GM10248 (cell line): ENCODE measurements at regions of chr13 and their contacts with region 1.

Region 1: GRCh38 chr13:77480066-77480465 is 55.4 kb upstream of the SCEL start:
- DNase-seq: no peak
- CTCF ChIP-seq: no peak

Region 2: DNA sequence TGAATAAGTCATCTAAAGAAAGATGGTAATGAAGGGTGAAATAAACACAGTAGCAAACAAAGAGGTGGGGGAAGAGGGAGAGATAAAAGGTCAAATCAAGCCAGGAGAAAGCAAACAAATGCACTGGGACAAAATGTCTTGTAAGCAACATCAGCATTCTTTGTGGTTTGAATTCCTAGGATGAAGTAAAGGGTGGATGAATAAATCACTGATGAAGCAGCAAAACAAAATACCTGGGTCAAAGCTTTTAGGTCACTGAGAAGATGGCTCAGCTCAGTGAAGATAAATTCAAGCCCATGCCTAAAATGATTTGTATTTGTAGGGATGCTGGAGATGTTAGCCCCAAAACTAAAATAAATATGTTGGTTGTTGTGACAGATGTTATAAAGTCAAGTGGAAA is 366.6 kb before region 1 on chr13:
- CTCF ChIA-PET with region 1: no interaction called
- POLR2A ChIA-PET with region 1: no interaction called
- DNase-seq: no peak
- CTCF ChIP-seq: no peak

Region 3: GRCh38 chr13:77329133-77329910 is 150.7 kb before region 1 on chr13:
- CTCF ChIA-PET with region 1: interaction called, 15 read pairs
- POLR2A ChIA-PET with region 1: interaction called, 4 read pairs
- DNase-seq: peak; percentile 82
- CTCF ChIP-seq: no peak

Region 4: GRCh38 chr13:77351315-77351714 is 128.8 kb before region 1 on chr13:
- CTCF ChIA-PET with region 1: interaction called, 12 read pairs
- POLR2A ChIA-PET with region 1: no interaction called
- DNase-seq: no peak
- CTCF ChIP-seq: no peak

Region 5: DNA sequence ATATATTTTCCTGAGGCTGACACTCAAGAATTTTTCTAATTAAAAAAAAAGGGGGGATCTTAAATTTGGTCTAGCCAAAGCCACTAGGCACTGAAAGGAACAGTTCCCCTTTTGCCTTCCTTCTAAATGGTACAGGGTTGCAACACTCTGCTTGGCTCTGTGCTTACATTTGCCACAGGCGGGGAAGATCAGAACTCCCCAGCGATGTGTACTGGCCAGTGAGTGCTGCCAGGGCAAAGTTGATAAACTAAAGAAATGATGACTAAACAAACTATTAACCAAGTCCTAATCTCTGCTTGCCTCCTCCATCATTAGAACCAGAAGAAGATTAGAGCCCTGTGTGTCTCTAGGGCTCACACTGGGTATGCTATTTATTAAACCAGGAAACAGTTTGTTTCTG is 19.9 kb before region 1 on chr13:
- CTCF ChIA-PET with region 1: interaction called, 33 read pairs
- POLR2A ChIA-PET with region 1: no interaction called
- DNase-seq: no peak
- CTCF ChIP-seq: no peak

Region 6: DNA sequence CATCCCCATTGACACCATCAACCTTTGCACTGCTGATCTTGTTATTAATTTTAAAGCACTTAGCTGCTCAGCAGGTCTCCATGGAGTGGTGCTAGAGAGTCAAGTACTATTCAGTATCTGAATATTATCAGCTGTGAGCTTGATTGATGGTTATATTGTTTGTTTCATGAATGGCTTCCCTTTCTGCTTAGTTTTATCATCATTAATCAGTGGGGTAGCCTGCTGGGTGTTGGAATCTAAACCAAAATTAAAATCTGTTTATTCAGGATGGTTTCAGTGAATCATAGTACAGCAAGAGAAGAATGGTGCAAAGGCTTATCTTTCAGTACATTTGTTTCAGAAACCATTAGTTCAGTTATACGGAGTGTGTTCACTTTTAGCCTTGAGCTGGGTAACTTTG is 12.9 kb after region 1 on chr13:
- CTCF ChIA-PET with region 1: interaction called, 33 read pairs
- POLR2A ChIA-PET with region 1: interaction called, 3 read pairs
- DNase-seq: peak; percentile 31
- CTCF ChIP-seq: peak; percentile 81

Region 7: DNA sequence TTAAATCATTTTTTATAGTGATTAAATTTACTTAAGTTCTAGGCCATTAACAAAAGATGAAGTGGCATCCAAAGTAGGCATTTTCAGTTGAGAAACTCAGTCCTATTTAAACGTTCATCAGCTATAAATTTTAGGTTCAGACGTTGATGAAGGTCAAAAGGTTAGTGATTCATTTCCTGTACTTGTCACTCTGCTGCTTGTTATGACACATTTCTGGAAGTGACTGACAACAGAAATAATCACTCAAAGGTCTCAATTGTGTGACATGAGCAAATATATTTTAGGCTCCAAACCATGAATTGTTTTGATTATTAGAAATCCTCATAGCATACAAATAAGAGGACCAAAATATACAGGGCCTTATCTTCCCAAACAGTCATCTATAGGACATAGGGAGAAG is 448.8 kb after region 1 on chr13:
- CTCF ChIA-PET with region 1: no interaction called
- POLR2A ChIA-PET with region 1: no interaction called
- DNase-seq: peak; percentile 33
- CTCF ChIP-seq: no peak